Lower leg skin (tissue), 4 donors: ENCODE measurements at regions of chr1 and their contacts with region 1.

Region 1: DNA sequence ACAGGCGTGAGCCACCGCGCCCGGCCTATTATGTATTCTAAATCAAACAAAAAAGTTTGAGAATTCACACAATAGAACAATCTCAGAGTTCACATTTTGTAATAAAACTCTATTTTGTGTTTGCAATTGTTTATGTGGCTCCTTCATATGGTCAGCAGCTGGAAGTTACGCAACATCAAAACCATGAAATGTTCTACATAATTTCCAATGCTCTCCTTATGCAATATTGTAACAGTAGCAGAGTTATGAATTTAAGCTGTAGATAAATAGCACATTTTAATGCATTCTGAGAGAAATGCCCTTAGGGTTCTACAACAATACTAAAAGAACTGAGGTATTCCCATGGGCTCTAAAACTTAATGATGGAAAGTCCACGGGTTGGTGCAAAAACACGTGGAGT is 62.3 kb upstream of the COL11A1 start:
- DNase-seq: no peak
- H3K4me3 ChIP-seq: no peak overlapping the region
- CTCF ChIP-seq: no peak
- POLR2A ChIP-seq: no peak

Region 2: DNA sequence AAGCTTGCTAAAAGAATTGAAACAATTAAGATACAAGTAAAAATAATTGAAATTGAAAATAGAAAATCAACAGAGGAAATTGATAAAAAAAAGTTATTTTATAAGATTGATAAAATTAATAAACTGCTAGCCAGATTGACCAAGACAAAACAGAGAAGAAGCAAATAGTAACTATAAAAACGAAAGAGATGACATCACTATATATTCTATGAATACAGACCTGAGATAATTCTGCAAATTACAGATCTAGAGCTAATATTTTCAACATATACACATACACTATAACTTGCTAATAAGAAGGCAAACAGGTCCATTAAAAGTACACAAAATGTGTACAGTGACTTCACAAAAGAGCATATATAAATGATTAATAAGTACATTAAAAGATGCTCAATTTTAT is 264.8 kb after region 1 on chr1:
- intact Hi-C with region 1: loop called (anchors 5 kb)
- DNase-seq: no peak
- H3K4me3 ChIP-seq: no peak overlapping the region
- CTCF ChIP-seq: no peak
- POLR2A ChIP-seq: no peak